Caco-2 (cell line): ENCODE measurements at regions of chr2 and their contacts with region 1.

Region 1: DNA sequence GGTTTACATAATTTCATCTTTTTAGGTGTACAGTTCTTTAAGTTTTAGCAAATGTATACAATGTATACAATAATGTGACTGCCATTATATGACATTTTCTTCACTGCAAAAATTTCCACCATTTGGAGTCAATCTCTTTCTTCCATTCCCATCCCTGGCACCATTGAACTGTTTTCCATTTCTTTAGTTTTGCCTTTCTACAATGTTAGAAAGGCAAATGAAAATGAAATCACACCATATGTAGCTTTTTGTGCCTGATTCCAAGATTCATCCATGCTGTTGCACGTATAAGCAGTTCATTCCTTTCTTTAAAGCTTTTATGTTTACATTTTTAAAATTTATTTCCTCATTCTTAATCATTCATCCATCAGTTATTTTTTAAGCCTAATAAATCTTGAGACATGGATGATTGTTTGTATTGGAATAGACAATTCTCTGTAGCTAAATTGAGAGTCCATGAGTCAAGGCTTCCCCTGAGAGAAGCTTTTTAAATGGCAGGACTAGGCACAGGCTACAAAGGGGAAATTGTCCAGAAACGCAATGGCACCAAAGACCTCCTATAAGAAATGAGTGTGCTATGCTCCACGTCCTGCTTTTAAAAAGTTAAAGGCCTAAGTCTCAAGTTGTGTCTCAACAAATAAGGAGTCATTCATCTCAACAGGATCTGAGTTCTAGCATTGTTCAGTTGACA is 8.7 kb upstream of the COL5A2 start:
- DNase-seq: no peak
- H3K4me3 ChIP-seq: no peak overlapping the region
- H3K4me3 Mint-ChIP-seq: no peak overlapping the region
- H3K27ac Mint-ChIP-seq: no peak overlapping the region
- H3K4me1 ChIP-seq: peaks cover 12% of the 10 kb centered on the region
- H3K4me1 Mint-ChIP-seq: peaks cover 18% of the 10 kb centered on the region
- H3K27me3 ChIP-seq: no peaks in the 10 kb centered on the region
- H3K27me3 Mint-ChIP-seq: no peaks in the 10 kb centered on the region
- CTCF ChIP-seq: no peak

Region 2: DNA sequence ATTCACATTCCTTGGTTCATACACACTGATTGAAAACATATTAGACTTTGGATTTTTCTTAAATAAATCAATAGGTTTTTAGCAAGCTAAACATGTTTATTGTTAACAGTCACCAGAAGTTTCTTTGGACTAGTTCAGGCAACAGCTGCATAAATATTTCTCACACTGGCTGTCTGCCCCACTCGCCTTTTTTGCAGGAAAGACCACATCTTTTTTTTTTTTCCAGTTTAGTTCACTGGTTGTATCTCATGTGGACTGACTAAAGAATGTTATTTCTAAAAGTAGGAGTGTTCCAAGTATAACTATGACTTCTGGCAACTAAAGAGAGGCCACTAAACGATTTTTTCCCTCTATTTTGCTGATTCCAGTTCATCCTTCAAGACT is 361.2 kb after region 1 on chr2:
- CTCF ChIA-PET with region 1: no interaction called
- POLR2A ChIA-PET with region 1: no interaction called
- intact Hi-C with region 1: loop called (anchors 10 kb)
- DNase-seq: no peak
- H3K4me3 ChIP-seq: no peak overlapping the region
- H3K4me3 Mint-ChIP-seq: no peak overlapping the region
- H3K27ac Mint-ChIP-seq: peak overlapping the region; percentile 66
- H3K4me1 ChIP-seq: peaks cover 32% of the 10 kb centered on the region
- H3K4me1 Mint-ChIP-seq: peaks cover 20% of the 10 kb centered on the region
- H3K27me3 ChIP-seq: no peaks in the 10 kb centered on the region
- H3K27me3 Mint-ChIP-seq: no peaks in the 10 kb centered on the region
- CTCF ChIP-seq: no peak